Naive thymus-derived CD4-positive, alpha-beta T cell (primary cell): ENCODE measurements at regions of chr1 and their contacts with region 1.

Region 1: DNA sequence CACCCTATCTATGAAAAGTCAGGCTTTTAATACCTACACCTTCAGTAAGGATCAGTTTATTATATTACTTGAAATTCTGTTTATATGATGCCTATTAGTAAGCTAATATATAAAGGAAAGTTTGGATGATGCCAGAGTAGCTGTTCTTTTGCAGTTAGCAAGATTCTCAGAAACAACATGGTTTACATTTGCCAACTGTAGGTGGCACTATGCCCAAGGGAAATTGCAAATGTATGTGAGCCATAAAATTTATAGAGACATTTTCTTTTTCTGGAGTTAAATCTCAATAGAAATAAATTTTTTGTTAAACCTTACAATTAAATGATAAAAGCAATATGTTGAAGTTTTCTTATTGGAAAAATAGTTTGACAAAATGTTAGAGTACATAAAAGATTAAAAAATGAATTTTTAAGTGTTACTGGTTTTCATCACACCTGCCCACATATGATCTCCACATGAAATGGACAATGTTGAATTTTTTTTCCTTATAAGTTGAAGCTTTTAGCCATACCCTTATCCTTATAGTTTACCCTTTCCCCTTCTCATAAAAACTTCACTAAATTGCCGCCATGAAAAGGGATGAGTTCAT is 32.1 kb upstream of the EPHX4 start:
- DNase-seq: peak in 7 of 9 donors; percentile 26 to 64 (median 49)
- ATAC-seq: peak; percentile 64
- H3K4me3 ChIP-seq: no peak overlapping the region
- H3K4me3 Mint-ChIP-seq: no peak overlapping the region
- H3K27ac ChIP-seq: no peak overlapping the region
- H3K27ac Mint-ChIP-seq: no peak overlapping the region
- H3K4me1 ChIP-seq: no peaks in the 10 kb centered on the region
- H3K4me1 Mint-ChIP-seq: no peaks in the 10 kb centered on the region
- H3K27me3 ChIP-seq: no peaks in the 10 kb centered on the region
- H3K27me3 Mint-ChIP-seq: peaks cover 0 to 10% (median 0%) of the 10 kb centered on the region in 5 donors

Region 2: GRCh38 chr1:91913018-91913417 is 84.7 kb before region 1 on chr1:
- CTCF ChIA-PET with region 1: no interaction called
- POLR2A ChIA-PET with region 1: no interaction called
- intact Hi-C with region 1: no loop called
- DNase-seq: no peak
- ATAC-seq: no peak
- H3K4me3 ChIP-seq: no peak overlapping the region
- H3K4me3 Mint-ChIP-seq: no peak overlapping the region
- H3K27ac ChIP-seq: no peak overlapping the region
- H3K27ac Mint-ChIP-seq: no peak overlapping the region
- H3K4me1 ChIP-seq: no peaks in the 10 kb centered on the region
- H3K4me1 Mint-ChIP-seq: peaks cover 0 to 1% (median 0%) of the 10 kb centered on the region in 7 donors
- H3K27me3 ChIP-seq: no peaks in the 10 kb centered on the region
- H3K27me3 Mint-ChIP-seq: peaks cover 0 to 16% (median 0%) of the 10 kb centered on the region in 5 donors

Region 3: GRCh38 chr1:92030656-92031107 is 33.0 kb after region 1 on chr1:
- CTCF ChIA-PET with region 1: no interaction called
- POLR2A ChIA-PET with region 1: no interaction called
- intact Hi-C with region 1: no loop called
- DNase-seq: peak in 1 of 9 donors; percentile 5
- ATAC-seq: no peak
- H3K4me3 ChIP-seq: peak overlapping the region; percentile 55
- H3K4me3 Mint-ChIP-seq: peak overlapping the region; percentile 70 to 87 (median 80)
- H3K27ac ChIP-seq: no peak overlapping the region
- H3K27ac Mint-ChIP-seq: peak overlapping the region in 4 of 9 donors; percentile 16 to 63 (median 52)
- H3K4me1 ChIP-seq: peaks cover 4 to 7% of the 10 kb centered on the region in 2 donors
- H3K4me1 Mint-ChIP-seq: peaks cover 5 to 24% (median 18%) of the 10 kb centered on the region in 7 donors
- H3K27me3 ChIP-seq: peaks cover 0 to 3% of the 10 kb centered on the region in 2 donors
- H3K27me3 Mint-ChIP-seq: peaks cover 16 to 40% (median 20%) of the 10 kb centered on the region in 5 donors

Region 4: GRCh38 chr1:92291372-92291999 is 293.8 kb after region 1 on chr1:
- CTCF ChIA-PET with region 1: interaction called, 27 read pairs
- POLR2A ChIA-PET with region 1: no interaction called
- intact Hi-C with region 1: loop called (anchors 1 kb)
- DNase-seq: peak in 4 of 9 donors; percentile 5 to 45 (median 41)
- ATAC-seq: peak; percentile 65
- H3K4me3 ChIP-seq: no peak overlapping the region
- H3K4me3 Mint-ChIP-seq: no peak overlapping the region
- H3K27ac ChIP-seq: no peak overlapping the region
- H3K27ac Mint-ChIP-seq: no peak overlapping the region
- H3K4me1 ChIP-seq: no peaks in the 10 kb centered on the region
- H3K4me1 Mint-ChIP-seq: peaks cover 18 to 31% (median 24%) of the 10 kb centered on the region in 7 donors
- H3K27me3 ChIP-seq: no peaks in the 10 kb centered on the region
- H3K27me3 Mint-ChIP-seq: no peaks in the 10 kb centered on the region

Region 5: DNA sequence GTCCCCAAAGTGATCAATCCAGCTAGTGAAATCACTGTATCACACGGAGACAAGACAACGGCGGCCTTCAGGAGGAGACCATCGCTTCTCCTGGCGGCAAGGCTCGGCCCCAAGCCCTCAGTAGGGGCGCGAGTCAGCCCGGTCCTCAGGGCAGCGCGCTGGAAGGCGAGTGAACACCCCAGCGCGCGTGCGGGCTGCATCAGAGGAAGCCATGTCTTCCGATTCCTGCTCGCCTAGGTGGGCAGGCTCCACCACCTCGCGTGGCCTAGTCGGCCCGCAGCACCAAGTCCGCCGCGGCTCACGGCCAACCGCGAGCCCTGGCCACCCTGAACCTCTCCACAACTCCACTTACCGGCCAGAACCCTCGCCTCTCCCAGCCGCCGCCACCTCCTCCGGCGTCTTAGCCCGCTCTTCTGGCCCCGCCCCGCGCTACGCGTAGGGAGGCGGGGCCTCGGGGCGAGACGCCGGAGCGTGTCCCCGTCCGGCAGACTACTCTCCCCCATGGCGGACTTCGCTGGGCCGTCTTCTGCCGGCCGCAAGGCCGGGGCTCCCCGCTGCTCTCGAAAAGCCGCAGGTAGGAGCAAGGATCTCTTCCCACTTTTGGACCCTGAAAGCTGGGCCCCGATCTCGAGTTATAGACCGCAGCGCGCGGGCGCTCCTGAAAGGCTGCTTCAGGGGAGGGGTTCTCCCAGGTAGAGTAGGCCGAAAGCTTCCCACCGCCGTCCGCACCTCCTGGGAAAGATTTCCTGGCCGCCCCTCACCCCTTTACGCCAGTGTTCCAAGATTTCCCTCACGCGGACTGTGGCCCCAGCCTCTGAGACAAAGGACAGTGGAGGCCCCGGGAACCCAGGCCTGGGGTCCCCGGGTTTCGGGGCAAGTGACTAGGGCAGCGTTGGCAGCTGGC is 301.1 kb after region 1 on chr1 and contains the starts of genes GLMN and RPAP2:
- CTCF ChIA-PET with region 1: interaction called, 5 read pairs
- POLR2A ChIA-PET with region 1: no interaction called
- intact Hi-C with region 1: loop called in 1 of 2 experiments (anchors 2 kb)
- DNase-seq: peak; percentile 55 to 86 (median 75)
- ATAC-seq: peak; percentile 97
- H3K4me3 ChIP-seq: peak within 1 kb of the TSS; percentile 93
- H3K4me3 Mint-ChIP-seq: peak within 1 kb of the TSS; percentile 93 to 99 (median 97)
- H3K27ac ChIP-seq: peak within 1 kb of the TSS; percentile 98
- H3K27ac Mint-ChIP-seq: peak within 1 kb of the TSS; percentile 91 to 99 (median 97)
- H3K4me1 ChIP-seq: peaks cover 10 to 19% of the 10 kb centered on the region in 2 donors
- H3K4me1 Mint-ChIP-seq: peaks cover 30 to 61% (median 48%) of the 10 kb centered on the region in 7 donors
- H3K27me3 ChIP-seq: no peaks in the 10 kb centered on the region
- H3K27me3 Mint-ChIP-seq: no peaks in the 10 kb centered on the region
- total RNA-seq, gene GLMN: 13.9 to 27.0 (median 14.3) TPM
- total RNA-seq, gene RPAP2: 29.5 to 50.7 (median 42.3) TPM

Region 6: GRCh38 chr1:92461364-92462097 is 463.8 kb after region 1 on chr1:
- CTCF ChIA-PET with region 1: no interaction called
- POLR2A ChIA-PET with region 1: no interaction called
- intact Hi-C with region 1: loop called in 1 of 2 experiments (anchors 1 kb)
- DNase-seq: no peak
- ATAC-seq: peak; percentile 18
- H3K4me3 ChIP-seq: no peak overlapping the region
- H3K4me3 Mint-ChIP-seq: peak overlapping the region in 3 of 10 donors; percentile 8 to 49 (median 32)
- H3K27ac ChIP-seq: no peak overlapping the region
- H3K27ac Mint-ChIP-seq: peak overlapping the region in 1 of 9 donors; percentile 68
- H3K4me1 ChIP-seq: peaks cover 23 to 27% of the 10 kb centered on the region in 2 donors
- H3K4me1 Mint-ChIP-seq: peaks cover 30 to 63% (median 57%) of the 10 kb centered on the region in 7 donors
- H3K27me3 ChIP-seq: no peaks in the 10 kb centered on the region
- H3K27me3 Mint-ChIP-seq: no peaks in the 10 kb centered on the region

Region 7: GRCh38 chr1:92599184-92599583 is 601.5 kb after region 1 on chr1:
- CTCF ChIA-PET with region 1: interaction called, 5 read pairs
- POLR2A ChIA-PET with region 1: no interaction called
- intact Hi-C with region 1: loop called in 1 of 2 experiments (anchors 1 kb)
- DNase-seq: peak in 6 of 9 donors; percentile 19 to 61 (median 48)
- ATAC-seq: peak; percentile 59
- H3K4me3 ChIP-seq: no peak overlapping the region
- H3K4me3 Mint-ChIP-seq: no peak overlapping the region
- H3K27ac ChIP-seq: no peak overlapping the region
- H3K27ac Mint-ChIP-seq: no peak overlapping the region
- H3K4me1 ChIP-seq: no peaks in the 10 kb centered on the region
- H3K4me1 Mint-ChIP-seq: peaks cover 4 to 30% (median 9%) of the 10 kb centered on the region in 7 donors
- H3K27me3 ChIP-seq: no peaks in the 10 kb centered on the region
- H3K27me3 Mint-ChIP-seq: no peaks in the 10 kb centered on the region

Region 8: DNA sequence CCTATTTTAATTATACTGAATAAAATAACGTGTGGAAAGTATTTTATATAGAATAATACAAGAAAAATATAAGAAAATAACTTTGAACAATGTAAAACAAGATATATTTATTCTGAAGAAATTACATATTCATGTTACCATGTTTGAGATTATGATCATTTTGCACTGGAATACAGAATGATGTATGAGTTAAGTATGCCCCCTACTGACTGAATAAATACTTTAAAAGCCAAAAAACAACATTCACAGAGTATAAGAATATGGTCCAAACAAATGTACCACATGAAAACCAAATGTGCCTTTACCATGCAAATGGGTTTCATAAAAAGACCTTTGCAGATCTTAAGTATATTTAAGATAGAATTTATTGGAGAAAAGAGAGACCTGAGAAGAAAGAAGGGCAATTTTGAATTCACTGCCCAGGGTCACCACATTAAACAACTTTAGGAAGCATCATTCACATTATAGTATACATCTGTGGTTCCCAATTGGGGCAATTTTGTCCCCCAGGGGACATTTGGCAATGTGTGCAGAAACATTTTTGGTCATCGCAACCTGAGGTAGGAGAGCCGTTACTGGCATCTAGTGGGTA is 625.6 kb after region 1 on chr1:
- CTCF ChIA-PET with region 1: interaction called, 18 read pairs
- POLR2A ChIA-PET with region 1: no interaction called
- intact Hi-C with region 1: loop called (anchors 1 kb)
- DNase-seq: peak in 6 of 9 donors; percentile 4 to 42 (median 35)
- ATAC-seq: peak; percentile 49
- H3K4me3 ChIP-seq: no peak overlapping the region
- H3K4me3 Mint-ChIP-seq: no peak overlapping the region
- H3K27ac ChIP-seq: no peak overlapping the region
- H3K27ac Mint-ChIP-seq: no peak overlapping the region
- H3K4me1 ChIP-seq: no peaks in the 10 kb centered on the region
- H3K4me1 Mint-ChIP-seq: no peaks in the 10 kb centered on the region
- H3K27me3 ChIP-seq: no peaks in the 10 kb centered on the region
- H3K27me3 Mint-ChIP-seq: peaks cover 0 to 4% (median 0%) of the 10 kb centered on the region in 5 donors

Region 9: DNA sequence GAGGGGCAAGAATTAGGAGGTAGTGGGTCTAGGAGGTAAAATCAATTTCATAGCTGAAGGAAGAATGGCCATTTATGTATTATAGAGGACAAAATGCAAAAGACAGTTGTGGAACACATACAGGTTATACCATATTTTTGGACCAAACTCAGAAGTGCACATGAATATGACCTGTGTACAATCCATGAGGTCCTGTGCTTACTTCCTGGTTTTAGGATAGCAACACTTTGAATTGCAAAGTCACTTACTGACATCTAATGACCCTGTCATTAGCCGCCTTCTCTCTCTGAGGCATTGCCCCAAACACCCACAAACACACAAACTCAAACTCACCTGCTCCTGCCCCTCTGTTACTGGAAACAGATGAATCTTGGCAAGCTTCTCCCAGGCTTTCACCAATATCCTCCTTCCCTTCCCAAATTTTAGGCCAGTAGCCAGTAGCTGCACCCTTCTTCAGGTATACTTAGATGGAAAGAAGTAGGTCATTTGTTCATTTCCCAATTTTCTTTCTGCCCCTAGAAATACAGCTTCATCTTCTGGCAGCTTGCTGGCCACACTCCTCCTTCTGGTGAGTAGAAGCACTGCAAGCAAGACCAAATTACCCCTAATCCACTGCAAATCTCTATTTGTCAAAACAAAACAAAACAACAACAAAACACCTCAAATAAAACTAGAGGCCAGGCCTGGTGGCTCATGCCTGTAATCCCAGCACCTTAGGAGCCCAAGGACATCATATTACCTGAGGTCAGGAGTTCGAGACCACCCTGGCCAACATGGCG is 820.5 kb after region 1 on chr1:
- CTCF ChIA-PET with region 1: no interaction called
- POLR2A ChIA-PET with region 1: no interaction called
- intact Hi-C with region 1: loop called in 1 of 2 experiments (anchors 1 kb)
- DNase-seq: peak in 4 of 9 donors; percentile 20 to 28 (median 28)
- ATAC-seq: peak; percentile 71
- H3K4me3 ChIP-seq: no peak overlapping the region
- H3K4me3 Mint-ChIP-seq: no peak overlapping the region
- H3K27ac ChIP-seq: no peak overlapping the region
- H3K27ac Mint-ChIP-seq: peak overlapping the region in 1 of 9 donors; percentile 31
- H3K4me1 ChIP-seq: no peaks in the 10 kb centered on the region
- H3K4me1 Mint-ChIP-seq: no peaks in the 10 kb centered on the region
- H3K27me3 ChIP-seq: no peaks in the 10 kb centered on the region
- H3K27me3 Mint-ChIP-seq: peaks cover 0 to 39% (median 9%) of the 10 kb centered on the region in 5 donors